ENCODE measurements at regions of chr5 and their contacts with region 1.

Region 1: GRCh38 chr5:37554938-37555337 is 175.8 kb downstream of the WDR70 start:
- DNase-seq: peak; percentile 64
- ATAC-seq: peak; percentile 42; the same call in 1 of the 2 replicates
- H3K4me3 ChIP-seq: no peak overlapping the region
- H3K27ac ChIP-seq: no peak overlapping the region
- H3K4me1 ChIP-seq: peaks cover 12% of the 10 kb centered on the region; the same call in 1 of the 2 replicates
- H3K27me3 ChIP-seq: no peaks in the 10 kb centered on the region
- CTCF ChIP-seq: peak; percentile 76

Region 2: GRCh38 chr5:37495210-37495609 is 59.7 kb before region 1 on chr5:
- CTCF ChIA-PET with region 1: no interaction called
- POLR2A ChIA-PET with region 1: no interaction called
- intact Hi-C with region 1: loop called (anchors 2 kb)
- DNase-seq: peak; percentile 56
- ATAC-seq: peak; percentile 41
- H3K4me3 ChIP-seq: no peak overlapping the region
- H3K27ac ChIP-seq: peak overlapping the region; percentile 65
- H3K4me1 ChIP-seq: peaks cover 21% of the 10 kb centered on the region
- H3K27me3 ChIP-seq: no peaks in the 10 kb centered on the region
- CTCF ChIP-seq: peak; percentile 56

Region 3: GRCh38 chr5:37722236-37723146 is 167.6 kb after region 1 on chr5:
- CTCF ChIA-PET with region 1: no interaction called
- POLR2A ChIA-PET with region 1: no interaction called
- intact Hi-C with region 1: loop called (anchors 10 kb)
- DNase-seq: peak; percentile 96
- ATAC-seq: peak; percentile 92
- H3K4me3 ChIP-seq: no peak overlapping the region
- H3K27ac ChIP-seq: peak overlapping the region; percentile 53
- H3K4me1 ChIP-seq: peaks cover 41% of the 10 kb centered on the region
- H3K27me3 ChIP-seq: no peaks in the 10 kb centered on the region
- CTCF ChIP-seq: no peak

Region 4: DNA sequence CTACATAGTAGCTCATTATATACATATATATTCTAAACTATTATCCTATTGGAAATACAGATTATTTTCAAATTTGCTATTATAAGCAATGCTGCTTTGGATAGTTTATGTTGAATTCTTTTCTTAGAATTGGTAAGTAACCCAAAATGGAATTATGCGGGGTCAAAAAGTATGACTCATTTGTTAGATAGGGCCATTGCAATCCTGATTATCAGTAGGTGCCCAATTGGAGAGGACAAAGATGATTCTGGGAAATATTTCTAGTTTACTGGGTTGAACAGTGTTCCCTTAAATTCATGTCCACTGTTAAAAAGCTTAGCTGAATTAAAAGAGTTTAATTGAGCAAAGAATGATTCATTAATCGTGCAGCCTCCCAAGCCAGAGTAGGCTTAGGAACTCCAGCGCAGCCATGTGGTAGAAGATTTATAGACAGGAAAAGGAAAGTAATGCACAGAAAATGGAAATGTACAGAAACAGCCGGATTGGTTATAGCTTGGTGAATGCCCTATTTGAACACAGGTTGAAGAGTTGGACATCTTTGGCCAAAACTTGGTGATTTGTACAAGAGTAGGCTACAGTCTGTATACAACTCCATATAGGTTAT is 203.1 kb after region 1 on chr5:
- CTCF ChIA-PET with region 1: interaction called, 3 read pairs
- POLR2A ChIA-PET with region 1: no interaction called
- intact Hi-C with region 1: loop called (anchors 10 kb)
- DNase-seq: peak; percentile 54
- ATAC-seq: no peak
- H3K4me3 ChIP-seq: no peak overlapping the region
- H3K27ac ChIP-seq: no peak overlapping the region
- H3K4me1 ChIP-seq: peaks cover 16% of the 10 kb centered on the region
- H3K27me3 ChIP-seq: no peaks in the 10 kb centered on the region
- CTCF ChIP-seq: peak; percentile 65

Measured in PC-3 (cell line).